PC-3 (cell line): ENCODE measurements at regions of chr1 and their contacts with region 1.

Region 1: DNA sequence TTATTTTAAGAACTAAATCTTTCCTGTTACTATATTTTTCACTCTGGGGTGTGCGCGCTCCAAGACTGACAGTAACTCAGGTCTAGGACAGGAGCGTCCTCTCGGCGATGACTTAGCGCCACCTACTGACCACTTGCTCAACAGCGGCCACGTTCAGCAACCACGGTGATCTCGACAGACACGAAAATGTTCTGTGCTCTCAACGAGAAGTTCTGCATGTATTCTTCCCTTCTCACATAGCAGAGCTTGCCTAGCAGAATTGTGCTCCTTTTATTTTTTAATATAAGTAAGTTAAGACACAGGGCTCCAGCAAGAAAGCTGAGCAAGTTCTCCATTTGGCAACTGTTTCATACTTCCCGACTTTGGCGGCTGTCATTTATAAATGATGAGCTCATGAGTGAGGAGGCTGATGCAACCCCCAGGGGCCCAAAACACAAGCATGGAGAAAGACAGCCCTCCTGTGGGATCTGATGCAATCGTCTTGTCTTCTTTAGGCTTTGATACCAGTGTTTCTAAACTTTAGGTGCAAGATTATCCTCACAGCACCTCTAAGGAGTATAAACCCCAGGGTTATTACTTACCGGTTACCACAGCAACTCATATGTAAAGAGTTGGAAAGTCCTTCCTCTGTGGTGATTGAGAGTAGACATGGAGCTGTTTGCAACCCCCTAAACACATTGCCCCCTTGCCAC is 92.6 kb downstream of the HHIPL2 start:
- DNase-seq: peak; percentile 98
- ATAC-seq: peak; percentile 99
- H3K4me3 ChIP-seq: peak overlapping the region; percentile 57
- H3K27ac ChIP-seq: no peak overlapping the region
- H3K4me1 ChIP-seq: peaks cover 7% of the 10 kb centered on the region; the same call in 1 of the 2 replicates
- H3K27me3 ChIP-seq: no peaks in the 10 kb centered on the region
- CTCF ChIP-seq: peak; percentile 99

Region 2: GRCh38 chr1:221035680-221036153 is 1419.6 kb before region 1 on chr1:
- CTCF ChIA-PET with region 1: no interaction called
- POLR2A ChIA-PET with region 1: no interaction called
- intact Hi-C with region 1: loop called (anchors 10 kb)
- DNase-seq: peak; percentile 92
- ATAC-seq: peak; percentile 46
- H3K4me3 ChIP-seq: peak overlapping the region; percentile 59
- H3K27ac ChIP-seq: peak overlapping the region; percentile 90
- H3K4me1 ChIP-seq: peaks cover 50% of the 10 kb centered on the region
- H3K27me3 ChIP-seq: no peaks in the 10 kb centered on the region
- CTCF ChIP-seq: no peak

Region 3: GRCh38 chr1:221478050-221478949 is 977.0 kb before region 1 on chr1:
- CTCF ChIA-PET with region 1: interaction called, 8 read pairs
- POLR2A ChIA-PET with region 1: no interaction called
- intact Hi-C with region 1: loop called (anchors 1 kb)
- DNase-seq: peak; percentile 94
- ATAC-seq: peak; percentile 100
- H3K4me3 ChIP-seq: no peak overlapping the region
- H3K27ac ChIP-seq: peak overlapping the region; percentile 53
- H3K4me1 ChIP-seq: peaks cover 20% of the 10 kb centered on the region
- H3K27me3 ChIP-seq: no peaks in the 10 kb centered on the region
- CTCF ChIP-seq: peak; percentile 98

Region 4: GRCh38 chr1:221612264-221612777 is 843.0 kb before region 1 on chr1:
- CTCF ChIA-PET with region 1: no interaction called
- POLR2A ChIA-PET with region 1: interaction called, 12 read pairs
- intact Hi-C with region 1: no loop called
- DNase-seq: peak; percentile 99
- ATAC-seq: peak; percentile 89
- H3K4me3 ChIP-seq: no peak overlapping the region
- H3K27ac ChIP-seq: peak overlapping the region; percentile 73
- H3K4me1 ChIP-seq: peaks cover 45% of the 10 kb centered on the region
- H3K27me3 ChIP-seq: no peaks in the 10 kb centered on the region
- CTCF ChIP-seq: no peak

Region 5: GRCh38 chr1:222009105-222009730 is 446.1 kb before region 1 on chr1:
- CTCF ChIA-PET with region 1: no interaction called
- POLR2A ChIA-PET with region 1: no interaction called
- intact Hi-C with region 1: loop called (anchors 1 kb)
- DNase-seq: peak; percentile 78
- ATAC-seq: peak; percentile 88
- H3K4me3 ChIP-seq: no peak overlapping the region
- H3K27ac ChIP-seq: no peak overlapping the region
- H3K4me1 ChIP-seq: peaks cover 12% of the 10 kb centered on the region; the same call in 1 of the 2 replicates
- H3K27me3 ChIP-seq: no peaks in the 10 kb centered on the region
- CTCF ChIP-seq: peak; percentile 94

Region 6: DNA sequence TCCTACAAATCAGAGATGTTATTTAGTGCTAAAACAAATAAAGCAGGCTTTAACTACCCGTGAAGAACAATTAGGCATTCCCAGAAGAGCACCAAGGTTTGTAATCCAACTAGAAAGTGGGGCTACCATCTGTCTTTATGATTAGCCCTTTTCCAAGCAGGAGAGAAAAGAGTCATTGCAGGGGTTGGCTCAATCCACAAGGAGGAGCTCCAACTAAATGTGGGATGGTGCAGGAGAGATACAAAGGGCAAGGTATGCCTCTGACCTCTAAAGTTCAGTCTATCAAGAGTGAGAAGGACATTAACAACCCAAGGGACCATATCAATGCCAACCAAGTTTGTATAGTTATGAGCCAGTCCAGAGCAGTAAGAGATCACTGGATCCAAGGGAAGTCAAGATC is 330.7 kb before region 1 on chr1:
- CTCF ChIA-PET with region 1: interaction called, 4 read pairs
- POLR2A ChIA-PET with region 1: no interaction called
- intact Hi-C with region 1: loop called (anchors 1 kb)
- DNase-seq: peak; percentile 32
- ATAC-seq: peak; percentile 35; the same call in 1 of the 2 replicates
- H3K4me3 ChIP-seq: no peak overlapping the region
- H3K27ac ChIP-seq: no peak overlapping the region
- H3K4me1 ChIP-seq: no peaks in the 10 kb centered on the region
- H3K27me3 ChIP-seq: no peaks in the 10 kb centered on the region
- CTCF ChIP-seq: peak; percentile 83

Region 7: GRCh38 chr1:222233444-222234158 is 221.7 kb before region 1 on chr1:
- CTCF ChIA-PET with region 1: no interaction called
- POLR2A ChIA-PET with region 1: no interaction called
- intact Hi-C with region 1: loop called (anchors 10 kb)
- DNase-seq: peak; percentile 28
- ATAC-seq: no peak
- H3K4me3 ChIP-seq: no peak overlapping the region
- H3K27ac ChIP-seq: no peak overlapping the region
- H3K4me1 ChIP-seq: no peaks in the 10 kb centered on the region
- H3K27me3 ChIP-seq: peaks cover 25% of the 10 kb centered on the region; the same call in 1 of the 2 replicates
- CTCF ChIP-seq: peak; percentile 47; the same call in 1 of the 2 replicates

Region 8: DNA sequence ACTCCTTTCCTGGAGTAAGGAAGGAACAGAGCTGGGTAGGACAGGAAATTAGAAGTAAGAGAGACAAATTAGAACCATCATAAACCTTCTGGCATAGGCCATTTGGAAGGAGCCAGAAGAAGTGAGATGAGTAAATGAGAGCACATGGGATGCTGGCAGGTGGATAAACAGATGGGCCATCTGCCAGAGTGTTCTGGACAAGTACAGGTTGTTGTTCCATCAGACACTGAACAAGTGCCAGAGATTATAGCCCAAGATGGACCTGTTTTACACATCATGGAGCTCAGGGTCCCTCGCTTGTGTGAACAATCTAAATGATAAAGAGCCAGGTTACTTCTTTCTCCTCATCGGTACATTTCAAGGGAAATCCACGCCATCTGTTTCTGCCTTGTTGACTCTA is 107.7 kb before region 1 on chr1:
- CTCF ChIA-PET with region 1: no interaction called
- POLR2A ChIA-PET with region 1: no interaction called
- intact Hi-C with region 1: no loop called
- DNase-seq: no peak
- ATAC-seq: no peak
- H3K4me3 ChIP-seq: no peak overlapping the region
- H3K27ac ChIP-seq: no peak overlapping the region
- H3K4me1 ChIP-seq: no peaks in the 10 kb centered on the region
- H3K27me3 ChIP-seq: peaks cover 78% of the 10 kb centered on the region
- CTCF ChIP-seq: no peak

Region 9: GRCh38 chr1:222370081-222370912 is 85.0 kb before region 1 on chr1:
- CTCF ChIA-PET with region 1: no interaction called
- POLR2A ChIA-PET with region 1: no interaction called
- intact Hi-C with region 1: no loop called
- DNase-seq: peak; percentile 53
- ATAC-seq: peak; percentile 71
- H3K4me3 ChIP-seq: no peak overlapping the region
- H3K27ac ChIP-seq: no peak overlapping the region
- H3K4me1 ChIP-seq: no peaks in the 10 kb centered on the region
- H3K27me3 ChIP-seq: peaks cover 60% of the 10 kb centered on the region
- CTCF ChIP-seq: no peak

Region 10: GRCh38 chr1:222732216-222733159 is 277.2 kb after region 1 on chr1:
- CTCF ChIA-PET with region 1: no interaction called
- POLR2A ChIA-PET with region 1: no interaction called
- intact Hi-C with region 1: no loop called
- DNase-seq: no peak
- ATAC-seq: no peak
- H3K4me3 ChIP-seq: no peak overlapping the region
- H3K27ac ChIP-seq: no peak overlapping the region
- H3K4me1 ChIP-seq: peaks cover 15% of the 10 kb centered on the region
- H3K27me3 ChIP-seq: no peaks in the 10 kb centered on the region
- CTCF ChIP-seq: no peak